ENCODE measurements at regions of chr13 and their contacts with region 1.

Region 1: DNA sequence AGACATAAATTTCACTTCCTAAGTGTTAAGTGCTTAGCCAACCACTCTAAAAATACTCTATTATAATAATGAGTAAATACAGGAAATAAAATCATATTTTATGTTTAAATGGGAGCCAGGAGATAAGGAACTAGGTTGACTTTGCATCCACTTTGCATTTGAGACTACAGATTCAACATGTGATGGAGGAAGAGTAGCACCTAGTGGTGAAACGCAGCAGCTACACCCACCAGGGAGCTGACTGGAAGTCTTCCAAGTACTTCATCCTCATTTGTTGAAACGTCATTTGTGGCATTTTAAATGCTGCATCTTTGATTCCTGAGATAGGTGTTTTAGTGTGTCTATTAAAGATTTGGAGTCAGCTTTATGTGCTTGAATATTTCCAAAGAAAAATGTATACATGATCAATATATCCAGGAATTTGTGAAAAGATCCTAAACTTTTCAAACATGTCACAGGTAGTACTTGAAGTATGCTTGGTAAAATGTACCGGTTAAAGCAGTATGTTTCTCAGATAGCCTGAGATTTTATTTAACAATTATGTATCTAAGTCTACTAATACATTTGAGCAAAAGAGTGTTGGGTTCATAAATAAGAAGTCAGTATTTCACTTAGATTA is 17.4 kb upstream of the KCTD12 start:
- DNase-seq: peak; percentile 69
- ATAC-seq: peak; percentile 84
- H3K4me3 ChIP-seq: no peak overlapping the region
- H3K27ac ChIP-seq: no peak overlapping the region
- H3K4me1 ChIP-seq: no peaks in the 10 kb centered on the region
- H3K27me3 ChIP-seq: peaks cover 20% of the 10 kb centered on the region
- CTCF ChIP-seq: peak; percentile 66 to 98 (median 96)
- POLR2A ChIP-seq: no peak
- RAD21 ChIP-seq: peak; percentile 87

Region 2: GRCh38 chr13:75579529-75579928 is 1324.1 kb before region 1 on chr13:
- CTCF ChIA-PET with region 1: no interaction called
- POLR2A ChIA-PET with region 1: no interaction called
- RAD21 ChIA-PET with region 1: no interaction called
- intact Hi-C with region 1: loop called (anchors 10 kb)
- DNase-seq: no peak
- ATAC-seq: no peak
- H3K4me3 ChIP-seq: no peak overlapping the region
- H3K27ac ChIP-seq: no peak overlapping the region
- H3K4me1 ChIP-seq: no peaks in the 10 kb centered on the region
- H3K27me3 ChIP-seq: no peaks in the 10 kb centered on the region
- CTCF ChIP-seq: no peak
- POLR2A ChIP-seq: no peak
- RAD21 ChIP-seq: no peak

Region 3: GRCh38 chr13:75687150-75687763 is 1216.4 kb before region 1 on chr13:
- CTCF ChIA-PET with region 1: interaction called, 6 read pairs
- POLR2A ChIA-PET with region 1: no interaction called
- RAD21 ChIA-PET with region 1: no interaction called
- intact Hi-C with region 1: loop called (anchors 2 kb)
- DNase-seq: peak; percentile 24
- ATAC-seq: peak; percentile 83
- H3K4me3 ChIP-seq: no peak overlapping the region
- H3K27ac ChIP-seq: no peak overlapping the region
- H3K4me1 ChIP-seq: peaks cover 8 to 11% of the 10 kb centered on the region in 2 experiments
- H3K27me3 ChIP-seq: no peaks in the 10 kb centered on the region
- CTCF ChIP-seq: peak; percentile 29 to 70 (median 58); a peak in 5 of 6 replicates
- POLR2A ChIP-seq: no peak
- RAD21 ChIP-seq: peak; percentile 60

Region 4: DNA sequence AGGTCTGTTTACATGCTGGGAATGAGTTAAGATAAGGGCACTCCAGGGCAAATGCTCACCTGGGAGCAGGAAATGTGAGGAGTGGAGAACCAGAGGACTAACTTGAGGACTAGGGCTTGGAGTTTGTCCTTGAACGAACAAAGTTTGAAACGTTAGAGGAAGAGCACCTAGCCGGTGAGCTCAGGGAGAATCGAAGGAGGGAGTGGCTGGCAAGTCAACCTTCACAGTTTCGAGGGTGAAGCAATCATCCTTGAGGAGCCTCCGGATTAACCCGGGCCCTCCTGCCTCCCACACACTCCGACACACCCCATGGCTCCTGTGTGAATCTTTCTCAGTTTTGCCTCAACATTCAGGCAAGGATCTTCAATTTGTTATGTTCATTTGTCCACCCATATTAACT is 1208.9 kb before region 1 on chr13:
- CTCF ChIA-PET with region 1: interaction called, 11 read pairs
- POLR2A ChIA-PET with region 1: no interaction called
- RAD21 ChIA-PET with region 1: no interaction called
- intact Hi-C with region 1: no loop called
- DNase-seq: no peak
- ATAC-seq: no peak
- H3K4me3 ChIP-seq: no peak overlapping the region
- H3K27ac ChIP-seq: no peak overlapping the region
- H3K4me1 ChIP-seq: no peaks in the 10 kb centered on the region
- H3K27me3 ChIP-seq: no peaks in the 10 kb centered on the region
- CTCF ChIP-seq: no peak
- POLR2A ChIP-seq: no peak
- RAD21 ChIP-seq: no peak

Region 5: GRCh38 chr13:75803164-75803611 is 1100.5 kb before region 1 on chr13:
- CTCF ChIA-PET with region 1: no interaction called
- POLR2A ChIA-PET with region 1: no interaction called
- RAD21 ChIA-PET with region 1: no interaction called
- intact Hi-C with region 1: loop called (anchors 2 kb)
- DNase-seq: no peak
- ATAC-seq: no peak
- H3K4me3 ChIP-seq: no peak overlapping the region
- H3K27ac ChIP-seq: no peak overlapping the region
- H3K4me1 ChIP-seq: peaks cover 8 to 12% of the 10 kb centered on the region in 2 experiments
- H3K27me3 ChIP-seq: no peaks in the 10 kb centered on the region
- CTCF ChIP-seq: no peak
- POLR2A ChIP-seq: no peak
- RAD21 ChIP-seq: no peak

Region 6: GRCh38 chr13:75876360-75877050 is 1027.1 kb before region 1 on chr13:
- CTCF ChIA-PET with region 1: interaction called, 10 read pairs
- POLR2A ChIA-PET with region 1: no interaction called
- RAD21 ChIA-PET with region 1: no interaction called
- intact Hi-C with region 1: loop called (anchors 1 kb)
- DNase-seq: peak; percentile 60
- ATAC-seq: peak; percentile 98
- H3K4me3 ChIP-seq: no peak overlapping the region
- H3K27ac ChIP-seq: no peak overlapping the region
- H3K4me1 ChIP-seq: peaks cover 0 to 4% of the 10 kb centered on the region in 2 experiments; a peak in 1 of 4 replicates
- H3K27me3 ChIP-seq: no peaks in the 10 kb centered on the region
- CTCF ChIP-seq: peak; percentile 81 to 86 (median 85)
- POLR2A ChIP-seq: no peak
- RAD21 ChIP-seq: peak; percentile 90

Region 7: DNA sequence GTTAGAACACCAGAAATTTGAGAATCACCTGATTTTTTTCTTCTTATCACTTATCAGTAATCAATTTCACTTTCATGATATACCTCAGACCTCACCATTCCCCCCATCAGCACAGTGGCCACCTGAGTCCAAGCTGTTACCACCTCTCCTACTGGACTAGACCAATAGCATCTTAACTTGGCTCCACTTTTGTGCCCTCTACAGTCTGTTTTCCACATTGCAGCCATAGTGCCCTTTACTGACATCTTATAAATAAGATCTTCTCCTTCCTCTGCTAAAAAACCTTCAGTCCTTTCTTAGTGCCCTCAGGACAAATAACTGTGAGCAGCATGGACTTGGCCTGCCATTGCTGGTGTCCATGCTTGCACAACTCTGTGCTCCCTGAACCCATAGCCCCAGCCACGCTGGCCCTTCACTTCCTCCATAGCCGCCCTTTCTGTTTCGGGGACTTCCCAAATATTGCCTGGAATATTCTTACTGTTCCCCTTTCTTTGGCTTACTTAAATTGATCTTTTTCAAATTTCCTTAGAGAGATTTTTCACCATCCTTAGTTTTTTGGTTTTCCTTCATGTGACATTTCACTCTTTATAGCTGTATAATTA is 886.8 kb before region 1 on chr13:
- CTCF ChIA-PET with region 1: no interaction called
- POLR2A ChIA-PET with region 1: no interaction called
- RAD21 ChIA-PET with region 1: no interaction called
- intact Hi-C with region 1: loop called (anchors 10 kb)
- DNase-seq: peak; percentile 35
- ATAC-seq: peak; percentile 67
- H3K4me3 ChIP-seq: no peak overlapping the region
- H3K27ac ChIP-seq: no peak overlapping the region
- H3K4me1 ChIP-seq: peaks cover 0 to 17% of the 10 kb centered on the region in 2 experiments
- H3K27me3 ChIP-seq: no peaks in the 10 kb centered on the region
- CTCF ChIP-seq: peak; percentile 29 to 67 (median 61); a peak in 5 of 6 replicates
- POLR2A ChIP-seq: no peak
- RAD21 ChIP-seq: peak; percentile 53

Region 8: DNA sequence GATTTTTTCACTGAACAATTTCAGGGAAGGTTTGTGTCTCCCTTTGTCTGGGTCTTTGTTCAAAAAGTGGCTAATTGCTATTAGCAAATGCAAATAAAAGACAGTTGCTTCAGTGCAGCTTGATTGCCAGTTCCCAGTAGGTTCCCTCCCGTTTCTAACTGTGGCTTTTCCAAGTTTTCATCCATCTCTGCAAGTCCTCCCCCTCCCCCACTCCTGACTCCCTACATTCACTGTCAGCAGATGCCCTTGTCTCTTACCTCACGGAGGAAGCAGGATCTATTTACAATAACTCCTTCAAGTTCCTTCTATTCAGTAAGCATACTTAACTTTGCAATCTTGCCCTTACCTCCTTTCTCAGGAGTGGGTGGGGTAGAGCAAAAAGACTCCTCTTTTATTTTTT is 576.4 kb after region 1 on chr13:
- CTCF ChIA-PET with region 1: no interaction called
- POLR2A ChIA-PET with region 1: no interaction called
- RAD21 ChIA-PET with region 1: no interaction called
- intact Hi-C with region 1: no loop called
- DNase-seq: no peak
- ATAC-seq: no peak
- H3K4me3 ChIP-seq: no peak overlapping the region
- H3K27ac ChIP-seq: no peak overlapping the region
- H3K4me1 ChIP-seq: peaks cover 0 to 7% of the 10 kb centered on the region in 2 experiments; a peak in 2 of 4 replicates
- H3K27me3 ChIP-seq: no peaks in the 10 kb centered on the region
- CTCF ChIP-seq: no peak
- POLR2A ChIP-seq: no peak
- RAD21 ChIP-seq: no peak